Activated B cell treated with CpG ODN at 0.5 μM for 24 hours (primary cell): ENCODE measurements at regions of chr6 and their contacts with region 1.

Region 1: GRCh38 chr6:36094753-36095496 is 35.4 kb upstream of the MAPK13 start:
- DNase-seq: peak; percentile 70
- ATAC-seq: peak; percentile 93
- H3K4me3 Mint-ChIP-seq: no peak overlapping the region
- H3K27ac Mint-ChIP-seq: peak overlapping the region; percentile 30
- H3K4me1 Mint-ChIP-seq: peaks cover 33% of the 10 kb centered on the region
- H3K27me3 Mint-ChIP-seq: no peaks in the 10 kb centered on the region
- CTCF ChIP-seq: peak; percentile 32

Region 2: DNA sequence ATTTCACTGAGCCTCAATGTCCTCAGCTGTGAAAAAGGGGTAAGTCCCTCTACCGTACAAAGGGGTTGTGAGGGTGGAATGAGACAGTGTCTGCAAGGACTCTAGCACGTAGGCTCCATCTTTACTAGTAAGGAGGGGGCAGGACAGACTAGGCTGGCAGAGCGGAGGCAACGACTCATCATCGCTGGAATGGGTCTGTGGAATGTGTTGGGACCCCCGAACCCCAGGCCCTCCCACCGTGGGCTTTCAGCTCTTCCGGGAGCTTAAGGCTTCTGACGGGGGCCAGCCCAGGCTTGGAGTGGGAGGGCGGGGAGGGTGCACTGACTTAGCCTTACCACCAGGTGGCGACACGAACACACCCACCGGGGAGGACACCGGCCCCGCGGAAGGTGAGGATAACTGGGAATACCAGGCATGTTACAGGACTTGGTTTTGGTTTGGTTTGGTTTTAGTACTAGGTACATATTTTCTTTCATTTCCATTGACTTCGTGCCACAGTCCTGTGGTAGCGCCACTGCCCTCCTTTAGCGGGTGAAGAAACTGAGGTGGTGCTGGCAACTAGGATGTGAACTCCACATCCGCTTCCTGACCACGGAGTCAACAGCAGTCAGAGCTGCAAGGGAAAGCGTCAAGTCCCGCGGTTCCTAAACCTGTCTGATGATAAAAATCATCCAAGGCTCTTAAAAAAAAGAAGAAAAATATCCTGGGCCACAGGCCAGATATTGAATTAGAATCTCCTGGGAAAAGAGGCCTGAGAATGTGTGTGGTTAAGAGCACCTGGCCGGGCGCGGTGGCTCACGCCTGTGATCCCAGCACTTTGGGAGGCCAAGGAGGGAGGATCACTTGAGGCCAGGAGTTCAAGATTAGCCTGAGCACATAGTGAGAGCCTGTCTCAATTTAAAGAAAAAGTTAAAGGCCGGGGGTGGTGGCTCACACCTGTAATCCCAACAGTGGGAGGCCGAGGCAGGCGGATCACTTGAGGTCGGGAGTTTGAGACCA is 572.0 kb before region 1 on chr6:
- CTCF ChIA-PET with region 1: no interaction called
- POLR2A ChIA-PET with region 1: no interaction called
- intact Hi-C with region 1: loop called (anchors 5 kb)
- DNase-seq: peak; percentile 54
- ATAC-seq: peak; percentile 96
- H3K4me3 Mint-ChIP-seq: peak overlapping the region; percentile 69
- H3K27ac Mint-ChIP-seq: no peak overlapping the region
- H3K4me1 Mint-ChIP-seq: peaks cover 8% of the 10 kb centered on the region
- H3K27me3 Mint-ChIP-seq: peaks cover 3% of the 10 kb centered on the region
- CTCF ChIP-seq: peak; percentile 98

Region 3: GRCh38 chr6:35920793-35921732 is 173.9 kb before region 1 on chr6 and contains the start of gene SRPK1:
- CTCF ChIA-PET with region 1: no interaction called
- POLR2A ChIA-PET with region 1: no interaction called
- intact Hi-C with region 1: loop called (anchors 10 kb)
- DNase-seq: peak; percentile 78
- ATAC-seq: peak; percentile 88
- H3K4me3 Mint-ChIP-seq: peak within 1 kb of the TSS; percentile 92
- H3K27ac Mint-ChIP-seq: peak within 1 kb of the TSS; percentile 86
- H3K4me1 Mint-ChIP-seq: peaks cover 33% of the 10 kb centered on the region
- H3K27me3 Mint-ChIP-seq: no peaks in the 10 kb centered on the region
- CTCF ChIP-seq: no peak
- total RNA-seq, gene SRPK1: 49.6 and 51.5 TPM in 2 replicates

Region 4: DNA sequence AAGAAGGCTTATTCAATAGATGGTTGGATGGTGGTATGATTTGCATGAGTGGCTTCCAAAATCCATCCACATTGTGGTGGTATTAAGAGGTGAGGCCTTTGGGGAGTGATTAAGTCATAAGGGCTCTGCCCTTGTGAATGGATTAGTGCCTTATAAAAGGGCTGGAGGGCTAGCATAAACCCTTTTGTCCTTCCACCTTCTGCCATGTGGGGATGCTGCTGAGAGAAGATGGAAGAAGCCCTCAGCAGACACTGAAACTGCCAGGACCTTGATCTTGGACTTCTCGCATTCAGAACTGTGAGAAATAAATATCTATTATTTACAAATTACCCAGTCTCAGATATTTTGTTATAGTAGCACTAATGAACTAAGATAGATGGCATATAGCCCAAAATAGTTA is 146.2 kb before region 1 on chr6:
- CTCF ChIA-PET with region 1: no interaction called
- POLR2A ChIA-PET with region 1: no interaction called
- intact Hi-C with region 1: no loop called
- DNase-seq: no peak
- ATAC-seq: no peak
- H3K4me3 Mint-ChIP-seq: no peak overlapping the region
- H3K27ac Mint-ChIP-seq: no peak overlapping the region
- H3K4me1 Mint-ChIP-seq: no peaks in the 10 kb centered on the region
- H3K27me3 Mint-ChIP-seq: peaks cover 2% of the 10 kb centered on the region
- CTCF ChIP-seq: no peak

Region 5: GRCh38 chr6:36063318-36064060 is 31.4 kb before region 1 on chr6:
- CTCF ChIA-PET with region 1: no interaction called
- POLR2A ChIA-PET with region 1: no interaction called
- intact Hi-C with region 1: no loop called
- DNase-seq: no peak
- ATAC-seq: no peak
- H3K4me3 Mint-ChIP-seq: no peak overlapping the region
- H3K27ac Mint-ChIP-seq: no peak overlapping the region
- H3K4me1 Mint-ChIP-seq: peaks cover 29% of the 10 kb centered on the region
- H3K27me3 Mint-ChIP-seq: no peaks in the 10 kb centered on the region
- CTCF ChIP-seq: no peak

Region 6: GRCh38 chr6:36123257-36124139 is 28.6 kb after region 1 on chr6:
- CTCF ChIA-PET with region 1: interaction called, 24 read pairs
- POLR2A ChIA-PET with region 1: interaction called, 4 read pairs
- intact Hi-C with region 1: loop called (anchors 1 kb)
- DNase-seq: peak; percentile 72
- ATAC-seq: peak; percentile 73
- H3K4me3 Mint-ChIP-seq: peak overlapping the region; percentile 41
- H3K27ac Mint-ChIP-seq: peak overlapping the region; percentile 86
- H3K4me1 Mint-ChIP-seq: peaks cover 73% of the 10 kb centered on the region
- H3K27me3 Mint-ChIP-seq: no peaks in the 10 kb centered on the region
- CTCF ChIP-seq: no peak

Region 7: DNA sequence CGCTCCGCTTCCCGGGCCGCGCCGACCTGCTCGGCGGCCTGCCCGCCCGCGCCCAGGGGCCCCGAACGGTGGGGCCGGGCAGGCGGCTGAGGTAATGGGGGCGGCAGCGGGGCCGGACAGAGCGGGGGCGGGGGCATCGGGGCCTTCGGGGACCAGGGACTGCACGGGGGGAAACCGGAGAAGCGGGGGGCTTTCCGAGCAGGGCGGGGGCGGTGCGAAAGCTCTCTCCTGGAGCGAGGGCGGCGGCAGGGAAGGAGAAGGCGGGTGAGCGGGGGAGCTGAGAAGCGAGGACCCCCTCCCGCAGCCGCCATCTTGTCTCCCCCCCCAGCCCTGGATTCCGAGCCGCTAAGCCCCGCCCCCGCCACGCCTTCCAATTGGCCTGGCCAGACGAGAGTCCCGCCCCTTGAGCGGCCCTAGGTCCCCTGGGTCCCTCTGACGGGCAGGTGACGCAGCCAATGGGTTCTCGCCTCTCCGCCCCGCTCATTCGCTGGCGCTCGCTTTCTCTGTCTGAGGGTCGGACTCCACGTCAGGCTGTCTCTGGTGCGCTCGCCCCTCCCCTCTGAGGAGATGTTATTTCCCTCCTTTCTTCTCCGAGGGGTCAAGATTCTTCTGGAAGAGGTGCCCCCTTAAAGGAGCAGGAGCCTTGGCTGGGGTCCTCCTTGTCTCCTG is 102.1 kb after region 1 on chr6:
- CTCF ChIA-PET with region 1: interaction called, 7 read pairs
- POLR2A ChIA-PET with region 1: no interaction called
- intact Hi-C with region 1: loop called (anchors 1 kb)
- DNase-seq: peak; percentile 100
- ATAC-seq: peak; percentile 89
- H3K4me3 Mint-ChIP-seq: peak overlapping the region; percentile 92
- H3K27ac Mint-ChIP-seq: peak overlapping the region; percentile 92
- H3K4me1 Mint-ChIP-seq: peaks cover 38% of the 10 kb centered on the region
- H3K27me3 Mint-ChIP-seq: no peaks in the 10 kb centered on the region
- CTCF ChIP-seq: no peak